CD4-positive, alpha-beta memory T cell (primary cell): ENCODE measurements at regions of chr17 and their contacts with region 1.

Region 1: GRCh38 chr17:27892866-27893769 is at the start of gene LYRM9:
- DNase-seq: peak; percentile 85 to 96 (median 92)
- H3K4me3 ChIP-seq: peak within 1 kb of the TSS; percentile 24 to 58
- H3K4me3 Mint-ChIP-seq: peak within 1 kb of the TSS; percentile 83 to 93 (median 90)
- H3K27ac ChIP-seq: peak within 1 kb of the TSS; percentile 61
- H3K27ac Mint-ChIP-seq: peak within 1 kb of the TSS; percentile 73 to 90 (median 85)
- H3K4me1 ChIP-seq: peaks cover 14% of the 10 kb centered on the region
- H3K4me1 Mint-ChIP-seq: peaks cover 4 to 16% (median 12%) of the 10 kb centered on the region in 4 donors
- H3K27me3 ChIP-seq: peaks cover 3% of the 10 kb centered on the region
- H3K27me3 Mint-ChIP-seq: peaks cover 12 to 18% of the 10 kb centered on the region in 2 donors
- total RNA-seq, gene LYRM9: 16.6 to 18.8 TPM

Region 2: GRCh38 chr17:27846042-27846655 is 47.0 kb before region 1 on chr17:
- CTCF ChIA-PET with region 1: interaction called, 8 read pairs
- POLR2A ChIA-PET with region 1: interaction called, 13 read pairs
- intact Hi-C with region 1: no loop called
- DNase-seq: peak; percentile 21 to 61 (median 34)
- H3K4me3 ChIP-seq: peak overlapping the region in 1 of 2 donors; percentile 23
- H3K4me3 Mint-ChIP-seq: peak overlapping the region; percentile 57 to 86 (median 82)
- H3K27ac ChIP-seq: peak overlapping the region; percentile 18
- H3K27ac Mint-ChIP-seq: peak overlapping the region; percentile 35 to 93 (median 88)
- H3K4me1 ChIP-seq: peaks cover 13% of the 10 kb centered on the region
- H3K4me1 Mint-ChIP-seq: peaks cover 11 to 28% (median 19%) of the 10 kb centered on the region in 4 donors
- H3K27me3 ChIP-seq: no peaks in the 10 kb centered on the region
- H3K27me3 Mint-ChIP-seq: no peaks in the 10 kb centered on the region

Region 3: DNA sequence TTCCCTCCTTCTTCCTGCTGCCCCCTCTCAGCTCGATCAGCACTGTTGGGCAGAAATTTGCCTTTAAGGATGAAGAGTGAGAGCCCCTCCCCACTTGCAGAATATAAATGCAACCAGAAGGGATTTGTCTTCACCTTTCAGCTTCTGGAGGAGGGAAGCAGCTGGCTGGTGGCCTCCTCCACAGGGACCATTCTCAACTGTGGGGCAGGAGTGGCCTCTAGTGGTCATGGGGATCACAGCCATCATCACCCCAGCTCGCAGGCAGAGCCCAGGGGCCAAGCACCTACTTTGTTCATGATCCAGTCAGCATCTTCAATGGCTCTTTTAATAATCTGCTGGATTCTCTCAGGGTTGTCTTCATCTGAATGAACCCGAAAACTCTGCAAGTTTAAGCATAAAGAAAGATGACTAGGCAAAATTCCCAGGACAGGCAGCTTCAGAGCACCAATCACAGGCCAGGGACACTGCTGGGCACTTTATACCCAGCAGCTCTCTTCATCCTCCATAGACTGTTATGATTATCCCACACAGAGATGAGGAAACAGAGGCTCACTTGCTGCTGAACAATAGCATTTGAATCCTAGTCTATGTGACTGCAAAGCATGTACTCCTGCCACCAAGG is 13.0 kb before region 1 on chr17:
- CTCF ChIA-PET with region 1: interaction called, 86 read pairs
- POLR2A ChIA-PET with region 1: interaction called, 16 read pairs
- intact Hi-C with region 1: no loop called
- DNase-seq: peak; percentile 50 to 62 (median 54)
- H3K4me3 ChIP-seq: no peak overlapping the region
- H3K4me3 Mint-ChIP-seq: peak overlapping the region in 2 of 8 donors; percentile 15 to 39
- H3K27ac ChIP-seq: no peak overlapping the region
- H3K27ac Mint-ChIP-seq: peak overlapping the region in 2 of 7 donors; percentile 47 to 48
- H3K4me1 ChIP-seq: peaks cover 16% of the 10 kb centered on the region
- H3K4me1 Mint-ChIP-seq: peaks cover 8 to 21% (median 17%) of the 10 kb centered on the region in 4 donors
- H3K27me3 ChIP-seq: no peaks in the 10 kb centered on the region
- H3K27me3 Mint-ChIP-seq: no peaks in the 10 kb centered on the region

Region 4: DNA sequence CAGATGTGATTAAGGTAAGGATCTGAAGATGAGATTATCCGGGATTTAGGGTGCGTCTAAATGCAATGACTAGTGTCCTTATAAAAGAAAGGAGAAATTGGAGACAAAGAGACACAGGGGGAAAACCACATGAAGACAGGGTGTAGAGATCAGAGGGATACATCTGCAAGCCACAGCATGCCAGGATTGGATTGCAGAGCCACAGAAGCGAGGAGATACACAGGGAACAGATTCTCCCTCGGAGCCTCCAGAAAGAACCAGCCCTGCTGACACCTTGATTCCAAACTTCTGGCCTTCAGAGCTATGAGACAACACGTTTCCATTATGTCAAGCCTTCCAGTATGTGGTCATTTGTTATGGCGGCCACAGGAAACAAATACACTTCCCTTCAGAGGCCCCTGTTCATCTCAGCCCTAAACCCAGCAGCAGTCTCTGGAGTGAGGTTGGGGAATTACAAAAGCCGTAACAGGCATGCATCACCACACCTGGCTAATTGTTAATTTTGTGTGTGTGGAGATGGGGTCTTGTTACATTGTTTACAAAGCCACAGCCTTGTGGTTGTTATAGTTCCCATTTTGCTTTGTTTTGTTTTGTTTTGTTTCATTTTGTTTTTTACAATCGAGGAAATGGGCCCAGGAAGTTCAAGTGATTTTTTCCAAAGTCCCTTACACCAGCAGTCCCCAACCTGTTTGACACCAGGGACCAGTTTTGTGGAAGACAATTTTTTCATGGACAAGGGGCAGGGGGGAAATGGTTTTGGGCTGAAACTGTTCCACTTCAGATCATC is 51.6 kb after region 1 on chr17:
- CTCF ChIA-PET with region 1: no interaction called
- POLR2A ChIA-PET with region 1: no interaction called
- intact Hi-C with region 1: no loop called
- DNase-seq: no peak
- H3K4me3 ChIP-seq: no peak overlapping the region
- H3K4me3 Mint-ChIP-seq: no peak overlapping the region
- H3K27ac ChIP-seq: no peak overlapping the region
- H3K27ac Mint-ChIP-seq: no peak overlapping the region
- H3K4me1 ChIP-seq: no peaks in the 10 kb centered on the region
- H3K4me1 Mint-ChIP-seq: no peaks in the 10 kb centered on the region
- H3K27me3 ChIP-seq: no peaks in the 10 kb centered on the region
- H3K27me3 Mint-ChIP-seq: peaks cover 1 to 3% of the 10 kb centered on the region in 2 donors

Region 5: DNA sequence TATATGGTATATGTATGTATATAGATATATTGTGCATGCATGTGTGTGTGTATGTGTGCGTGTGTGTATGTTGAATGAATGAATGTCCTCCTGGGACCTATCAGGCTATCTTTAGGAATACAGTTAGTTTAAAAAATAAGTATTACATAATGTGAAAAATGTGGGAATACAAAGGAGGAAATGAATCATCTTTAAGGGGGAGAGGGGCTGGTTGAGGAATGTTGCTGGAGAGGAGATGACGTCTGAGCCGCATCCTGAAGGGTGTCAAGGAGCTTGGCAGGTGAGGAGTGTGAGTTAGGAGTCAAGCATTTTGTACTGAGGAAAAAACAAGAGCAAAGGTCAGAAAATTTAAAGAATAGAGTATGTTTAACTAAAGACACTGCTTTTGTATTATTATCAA is 86.9 kb after region 1 on chr17:
- CTCF ChIA-PET with region 1: no interaction called
- POLR2A ChIA-PET with region 1: no interaction called
- intact Hi-C with region 1: no loop called
- DNase-seq: no peak
- H3K4me3 ChIP-seq: no peak overlapping the region
- H3K4me3 Mint-ChIP-seq: no peak overlapping the region
- H3K27ac ChIP-seq: no peak overlapping the region
- H3K27ac Mint-ChIP-seq: no peak overlapping the region
- H3K4me1 ChIP-seq: peaks cover 4% of the 10 kb centered on the region
- H3K4me1 Mint-ChIP-seq: peaks cover 0 to 3% (median 1%) of the 10 kb centered on the region in 4 donors
- H3K27me3 ChIP-seq: no peaks in the 10 kb centered on the region
- H3K27me3 Mint-ChIP-seq: peaks cover 7 to 14% of the 10 kb centered on the region in 2 donors

Region 6: GRCh38 chr17:27993723-27994310 is 100.7 kb after region 1 on chr17:
- CTCF ChIA-PET with region 1: no interaction called
- POLR2A ChIA-PET with region 1: no interaction called
- intact Hi-C with region 1: no loop called
- DNase-seq: no peak
- H3K4me3 ChIP-seq: no peak overlapping the region
- H3K4me3 Mint-ChIP-seq: no peak overlapping the region
- H3K27ac ChIP-seq: no peak overlapping the region
- H3K27ac Mint-ChIP-seq: no peak overlapping the region
- H3K4me1 ChIP-seq: no peaks in the 10 kb centered on the region
- H3K4me1 Mint-ChIP-seq: no peaks in the 10 kb centered on the region
- H3K27me3 ChIP-seq: no peaks in the 10 kb centered on the region
- H3K27me3 Mint-ChIP-seq: peaks cover 9 to 18% of the 10 kb centered on the region in 2 donors

Region 7: DNA sequence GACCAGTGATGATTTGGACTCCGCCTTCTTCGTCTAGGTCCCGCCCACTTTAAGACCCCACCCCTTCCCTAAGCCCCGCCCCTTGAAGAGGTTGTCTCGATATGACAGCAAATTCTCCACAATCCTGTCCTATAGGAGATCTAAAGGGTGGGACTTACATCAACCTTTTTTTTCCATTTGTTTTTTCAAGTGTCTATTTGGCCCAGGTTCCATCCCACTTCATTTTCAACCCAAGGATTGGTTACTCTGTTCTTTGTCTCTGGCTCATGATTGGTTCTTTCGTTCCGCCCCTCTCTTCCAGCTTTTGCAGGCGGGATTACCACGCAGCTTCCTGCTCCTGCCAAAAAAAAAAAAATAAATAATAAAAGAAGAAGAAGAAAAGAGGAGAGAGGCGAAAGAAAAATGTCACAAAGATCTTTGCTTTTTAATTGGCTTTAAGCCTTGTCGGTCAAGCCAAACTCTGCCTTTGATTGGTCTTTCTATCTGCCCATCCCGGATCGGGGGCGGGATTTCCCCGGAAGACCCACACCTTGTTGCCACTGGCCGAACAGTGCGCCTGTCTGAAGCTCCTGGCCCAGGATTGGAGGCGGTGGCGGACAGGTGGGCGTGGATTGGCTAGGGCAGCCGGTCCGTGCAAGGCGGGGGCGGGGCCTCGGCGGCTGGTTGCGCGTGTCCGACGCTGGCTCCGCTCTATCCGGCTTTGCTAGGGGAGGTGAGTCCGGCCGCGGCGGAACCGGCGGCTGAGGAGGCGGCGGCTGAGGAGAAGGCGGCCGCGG is 148.1 kb after region 1 on chr17:
- CTCF ChIA-PET with region 1: no interaction called
- POLR2A ChIA-PET with region 1: interaction called, 7 read pairs
- intact Hi-C with region 1: loop called (anchors 1 kb)
- DNase-seq: peak; percentile 99
- H3K4me3 ChIP-seq: peak overlapping the region in 1 of 2 donors; percentile 47
- H3K4me3 Mint-ChIP-seq: peak overlapping the region; percentile 77 to 92 (median 88)
- H3K27ac ChIP-seq: peak overlapping the region; percentile 49
- H3K27ac Mint-ChIP-seq: peak overlapping the region; percentile 80 to 95 (median 86)
- H3K4me1 ChIP-seq: peaks cover 42% of the 10 kb centered on the region
- H3K4me1 Mint-ChIP-seq: peaks cover 41 to 59% (median 49%) of the 10 kb centered on the region in 4 donors
- H3K27me3 ChIP-seq: no peaks in the 10 kb centered on the region
- H3K27me3 Mint-ChIP-seq: no peaks in the 10 kb centered on the region